Left colon (tissue), 2 donors: ENCODE measurements at regions of chr5 and their contacts with region 1.

Region 1: DNA sequence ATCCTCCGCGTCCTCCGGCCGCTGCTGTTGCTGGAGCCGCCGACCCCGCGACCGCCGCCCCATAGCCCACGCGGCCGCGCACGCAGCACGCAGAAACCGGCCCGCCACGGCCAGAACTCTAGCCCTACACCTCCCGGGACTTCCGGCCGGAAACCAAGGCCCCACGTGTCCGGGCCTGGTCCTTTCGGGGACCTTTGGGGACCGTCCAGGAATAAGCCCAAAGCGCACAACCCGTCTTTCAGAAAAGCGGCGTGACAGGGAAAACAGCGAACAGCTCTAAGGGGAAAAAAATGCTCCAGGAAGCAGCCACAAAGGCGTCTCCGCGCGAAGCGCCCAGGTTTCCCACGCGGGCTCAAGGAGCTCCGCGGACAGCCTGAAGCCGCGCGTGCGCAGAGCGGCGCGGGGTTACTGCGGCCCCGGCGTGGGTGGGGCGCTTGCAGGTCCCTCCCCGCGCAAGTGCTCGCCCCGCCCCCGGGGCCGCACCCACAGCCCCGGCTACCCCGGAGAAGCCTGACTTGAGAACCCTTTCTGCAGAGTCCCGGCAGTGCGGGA is at the starts of genes NSUN2 and SRD5A1:
- DNase-seq: peak; percentile 91 to 93
- ATAC-seq: peak; percentile 95
- total RNA-seq, gene NSUN2: 49.2 to 56.7 TPM
- total RNA-seq, gene SRD5A1: 16.3 to 18.9 TPM

Region 2: DNA sequence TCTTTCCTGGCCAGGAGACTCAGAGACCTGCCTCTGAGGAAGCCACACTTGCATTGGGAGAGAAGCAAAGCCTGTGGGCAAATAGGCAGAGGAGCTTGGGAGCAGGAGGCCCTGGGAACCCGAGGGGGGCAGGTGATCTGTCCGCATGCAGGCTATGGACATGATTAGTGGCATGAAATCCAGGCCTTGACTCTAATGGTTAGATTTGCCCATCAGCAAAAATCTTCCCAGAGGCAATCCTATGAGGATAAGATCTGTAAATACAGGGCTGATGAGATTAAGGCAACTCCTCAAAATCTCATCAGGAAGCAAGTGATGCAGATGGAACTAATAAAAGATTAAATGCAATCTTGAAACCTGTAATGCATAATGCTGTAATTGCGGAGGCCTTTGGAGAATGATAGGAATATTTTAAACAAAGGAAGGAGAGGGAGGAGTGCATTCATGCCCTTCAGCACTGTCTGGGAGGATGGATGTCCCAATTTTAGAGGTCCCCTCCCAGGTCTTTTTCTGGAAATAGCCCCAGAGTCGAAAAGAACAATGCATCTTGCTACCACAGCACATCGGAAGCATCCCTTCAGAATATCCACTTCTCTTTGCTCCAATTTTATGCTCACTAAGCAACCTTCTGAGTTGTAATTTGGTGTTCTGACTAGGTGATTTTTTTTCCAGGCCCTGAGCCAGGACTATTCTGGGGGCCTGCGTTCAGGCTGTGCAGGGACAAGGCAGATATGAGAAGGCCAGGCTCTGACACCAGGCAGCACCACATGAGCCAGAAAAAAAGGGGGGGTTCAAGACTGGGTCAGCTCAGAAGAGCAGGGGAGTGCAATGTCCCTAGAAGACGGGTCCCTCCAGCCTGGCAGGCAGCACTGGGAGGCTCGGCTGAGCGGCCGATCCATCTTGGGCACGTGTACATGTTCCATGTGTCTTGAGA is 321.2 kb before region 1 on chr5:
- intact Hi-C with region 1: no loop called
- DNase-seq: no peak
- ATAC-seq: no peak

Region 3: DNA sequence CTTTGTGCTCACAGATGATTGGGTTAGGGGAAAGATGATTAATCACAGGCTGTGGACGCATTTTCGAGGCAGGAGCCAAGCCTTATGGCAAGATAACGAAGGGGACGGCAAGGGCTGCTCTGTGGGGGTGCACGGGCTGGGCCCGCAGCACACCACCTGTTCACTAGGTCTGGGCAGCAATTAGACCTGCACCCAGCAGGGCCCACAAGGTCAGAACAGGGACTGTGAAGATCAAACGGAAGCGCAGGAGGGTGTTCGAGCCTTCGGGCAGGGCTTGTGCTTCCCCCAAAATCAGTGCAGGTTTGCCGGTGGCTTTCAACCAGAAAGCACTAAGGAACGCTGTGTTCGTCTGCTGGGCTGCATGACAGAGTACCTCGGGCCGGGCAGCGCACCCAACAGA is 110.7 kb before region 1 on chr5:
- intact Hi-C with region 1: no loop called
- DNase-seq: no peak
- ATAC-seq: no peak

Region 4: GRCh38 chr5:6686915-6687409 is 54.0 kb after region 1 on chr5:
- intact Hi-C with region 1: no loop called
- DNase-seq: no peak
- ATAC-seq: peak; percentile 57

Region 5: GRCh38 chr5:6704361-6704851 is 71.4 kb after region 1 on chr5:
- intact Hi-C with region 1: loop called in 1 of 2 experiments (anchors 10 kb)
- DNase-seq: peak in 1 of 2 donors; percentile 68
- ATAC-seq: no peak